Activated CD4-positive, alpha-beta memory T cell treated with anti-CD3 and anti-CD28 coated beads, Interleukin-2, amount 10 ng/mL, durations not matched to agents 7 days and 5 days (primary cell): ENCODE measurements at regions of chr17 and their contacts with region 1.

Region 1: DNA sequence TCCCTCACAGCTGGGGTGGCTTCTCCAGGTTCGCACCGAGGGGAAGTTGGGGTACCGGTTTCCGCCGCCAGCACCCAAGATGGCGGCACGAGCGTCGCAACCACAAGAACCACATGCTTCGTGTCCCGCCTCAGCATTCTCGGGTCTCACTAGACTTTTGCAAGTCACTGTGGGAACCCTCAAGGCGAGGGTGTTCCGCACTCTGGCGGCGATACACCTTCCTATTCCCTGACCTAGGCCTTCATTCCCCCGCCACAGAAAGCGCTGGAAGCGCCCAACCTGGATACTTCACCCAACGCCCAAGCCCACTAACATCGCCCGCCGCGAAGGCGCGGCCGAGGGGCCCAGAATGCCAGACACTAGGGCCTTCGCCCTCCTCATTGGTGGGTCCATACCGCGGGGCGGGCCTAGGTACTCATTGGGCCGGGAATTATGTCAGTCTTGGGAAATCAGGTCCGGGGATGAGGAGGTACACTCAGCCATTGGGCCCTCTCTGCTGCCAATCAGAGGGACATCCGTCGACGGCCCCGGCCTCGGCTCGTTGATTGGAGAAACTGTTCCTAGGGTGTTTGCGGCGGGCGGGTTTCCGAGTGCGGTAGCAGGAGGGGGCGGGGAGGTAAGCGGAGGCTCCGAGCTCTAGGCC is at the start of gene NFE2L1:
- DNase-seq: peak; percentile 99
- H3K4me3 Mint-ChIP-seq: peak within 1 kb of the TSS; percentile 99
- H3K27ac Mint-ChIP-seq: peak within 1 kb of the TSS; percentile 97
- H3K4me1 Mint-ChIP-seq: peaks cover 64% of the 10 kb centered on the region
- H3K27me3 Mint-ChIP-seq: no peaks in the 10 kb centered on the region
- total RNA-seq, gene NFE2L1: 69.4 to 70.2 TPM

Region 2: DNA sequence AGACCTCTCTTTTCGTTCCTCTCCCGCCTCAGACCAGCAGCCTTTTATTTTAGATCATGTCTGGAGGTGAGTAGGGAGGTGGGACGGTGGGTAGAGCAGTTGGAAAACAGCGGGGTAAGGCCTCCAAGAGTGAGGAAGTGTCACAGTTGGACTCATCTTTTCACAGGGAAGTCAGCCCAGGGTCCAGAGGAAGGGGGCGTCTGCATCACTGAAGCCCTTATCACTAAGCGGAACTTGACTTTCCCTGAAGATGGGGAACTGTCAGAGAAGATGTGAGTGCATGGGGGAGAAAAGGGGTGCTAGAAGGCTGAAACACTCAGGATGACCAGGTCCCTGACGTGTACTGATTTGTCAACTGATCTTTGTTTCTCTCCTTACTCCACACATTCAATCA is 215.9 kb before region 1 on chr17:
- CTCF ChIA-PET with region 1: no interaction called
- POLR2A ChIA-PET with region 1: no interaction called
- DNase-seq: no peak
- H3K4me3 Mint-ChIP-seq: peak overlapping the region; percentile 90
- H3K27ac Mint-ChIP-seq: peak overlapping the region; percentile 100
- H3K4me1 Mint-ChIP-seq: peaks cover 69% of the 10 kb centered on the region
- H3K27me3 Mint-ChIP-seq: no peaks in the 10 kb centered on the region

Region 3: DNA sequence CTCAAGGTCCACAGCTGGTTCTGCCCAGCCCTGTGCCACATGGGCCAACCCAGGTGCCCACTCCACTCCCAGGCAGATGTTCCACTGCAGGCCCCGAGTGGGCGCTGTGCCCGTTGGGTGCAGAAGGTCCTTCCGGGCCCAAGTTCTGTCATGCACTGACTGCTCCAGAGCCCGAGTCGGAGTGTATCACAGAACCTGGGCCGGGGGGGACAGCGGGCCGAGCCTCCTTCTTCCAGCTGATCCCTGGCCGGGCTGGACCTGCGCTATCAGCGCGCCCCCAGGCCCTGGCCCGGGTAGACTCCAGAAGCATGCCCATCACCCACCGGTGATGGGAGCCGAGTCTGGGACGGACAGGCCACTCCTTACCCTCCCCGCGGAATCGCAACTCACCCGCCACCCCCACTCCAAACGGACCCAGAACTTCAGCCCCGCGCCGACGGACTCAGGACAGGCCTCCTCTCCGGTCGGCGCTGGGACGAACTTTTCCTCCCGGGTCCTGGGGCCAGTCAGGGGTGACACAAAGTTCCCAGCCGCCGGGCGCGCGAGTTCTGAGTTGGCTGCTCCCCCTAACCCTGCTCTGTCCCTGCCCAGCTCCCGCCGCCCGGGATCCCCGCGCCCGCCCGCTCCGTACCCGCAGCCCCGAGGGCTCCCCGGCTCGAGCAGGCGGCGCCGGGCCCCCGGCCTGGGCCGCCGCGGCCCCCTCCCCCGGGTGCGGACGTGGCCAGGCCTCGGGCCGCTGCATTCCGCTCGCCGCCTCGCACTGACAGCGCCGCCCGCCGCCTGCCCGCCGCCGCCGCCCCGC is 10.6 kb before region 1 on chr17 and contains the start of gene COPZ2:
- CTCF ChIA-PET with region 1: interaction called, 36 read pairs
- POLR2A ChIA-PET with region 1: interaction called, 57 read pairs
- DNase-seq: peak; percentile 75
- H3K4me3 Mint-ChIP-seq: peak within 1 kb of the TSS; percentile 79
- H3K27ac Mint-ChIP-seq: peak within 1 kb of the TSS; percentile 30
- H3K4me1 Mint-ChIP-seq: peaks cover 12% of the 10 kb centered on the region
- H3K27me3 Mint-ChIP-seq: peaks cover 40% of the 10 kb centered on the region
- total RNA-seq, gene COPZ2: 7.4 to 11.5 TPM

Region 4: GRCh38 chr17:48060249-48060648 is 12.4 kb after region 1 on chr17:
- CTCF ChIA-PET with region 1: interaction called, 5 read pairs
- POLR2A ChIA-PET with region 1: interaction called, 23 read pairs
- DNase-seq: no peak
- H3K4me3 Mint-ChIP-seq: no peak overlapping the region
- H3K27ac Mint-ChIP-seq: no peak overlapping the region
- H3K4me1 Mint-ChIP-seq: peaks cover 20% of the 10 kb centered on the region
- H3K27me3 Mint-ChIP-seq: no peaks in the 10 kb centered on the region

Region 5: DNA sequence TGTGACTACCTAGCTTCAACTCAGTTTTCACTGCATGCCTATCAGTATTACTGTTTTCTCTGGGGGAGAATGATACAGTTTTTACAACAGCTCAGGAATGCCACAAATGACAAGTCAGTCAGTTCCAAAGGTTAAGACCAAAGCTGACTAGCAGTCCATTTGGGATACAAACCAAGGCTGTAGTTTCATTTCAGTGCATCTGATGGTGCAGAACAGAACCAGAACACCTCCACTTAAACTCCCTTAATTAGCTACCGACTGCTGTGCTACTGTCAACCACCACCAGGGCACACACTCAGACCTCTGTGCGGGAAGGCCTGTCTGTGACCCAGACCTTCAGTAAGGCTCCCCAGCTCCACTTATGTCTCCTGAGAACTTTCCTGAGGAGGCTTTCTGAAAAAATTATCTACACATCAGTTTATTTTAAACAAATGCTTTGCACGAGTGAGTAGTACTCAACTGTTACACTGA is 20.7 kb after region 1 on chr17:
- CTCF ChIA-PET with region 1: interaction called, 10 read pairs
- POLR2A ChIA-PET with region 1: interaction called, 9 read pairs
- DNase-seq: no peak
- H3K4me3 Mint-ChIP-seq: no peak overlapping the region
- H3K27ac Mint-ChIP-seq: no peak overlapping the region
- H3K4me1 Mint-ChIP-seq: no peaks in the 10 kb centered on the region
- H3K27me3 Mint-ChIP-seq: no peaks in the 10 kb centered on the region

Region 6: DNA sequence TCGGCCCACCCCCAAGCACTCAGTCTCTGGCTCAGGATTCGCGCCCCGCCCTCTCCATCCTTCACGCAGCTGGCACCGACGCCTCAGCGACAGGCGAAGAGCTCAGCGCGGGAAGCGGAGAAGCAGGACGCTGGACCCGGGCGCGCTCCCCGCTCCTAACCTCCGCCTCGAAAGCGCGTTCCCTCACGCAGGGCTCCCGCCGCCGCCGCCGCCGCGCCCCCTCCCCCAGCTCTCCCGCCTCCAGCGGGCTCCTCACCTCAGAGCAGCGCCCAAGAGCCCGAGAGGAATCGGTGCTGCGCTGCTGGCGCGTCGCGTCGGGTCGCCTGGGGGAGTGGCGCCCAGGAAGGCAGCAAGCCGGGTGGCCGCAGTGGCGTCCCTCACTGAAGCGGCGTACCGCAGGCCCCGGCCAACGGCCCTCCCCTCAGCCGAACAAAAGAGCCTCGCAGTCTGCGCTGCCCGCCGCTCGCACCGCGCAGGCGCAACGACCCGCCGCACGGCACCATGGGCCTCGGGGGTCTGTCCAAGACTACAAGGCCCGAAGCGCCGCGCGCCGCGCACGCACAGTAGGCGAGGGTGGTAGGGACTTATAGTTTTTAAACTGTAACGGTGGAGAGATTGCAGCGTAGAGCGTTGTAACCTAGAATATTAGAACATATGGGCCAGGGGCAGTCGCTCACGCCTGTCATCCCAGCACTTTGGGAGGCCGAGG is 53.3 kb after region 1 on chr17 and contains the start of gene CBX1:
- CTCF ChIA-PET with region 1: interaction called, 11 read pairs
- POLR2A ChIA-PET with region 1: interaction called, 49 read pairs
- DNase-seq: peak; percentile 95
- H3K4me3 Mint-ChIP-seq: peak within 1 kb of the TSS; percentile 94
- H3K27ac Mint-ChIP-seq: peak within 1 kb of the TSS; percentile 85
- H3K4me1 Mint-ChIP-seq: peaks cover 57% of the 10 kb centered on the region
- H3K27me3 Mint-ChIP-seq: no peaks in the 10 kb centered on the region
- total RNA-seq, gene CBX1: 48.3 to 50.8 TPM

Region 7: DNA sequence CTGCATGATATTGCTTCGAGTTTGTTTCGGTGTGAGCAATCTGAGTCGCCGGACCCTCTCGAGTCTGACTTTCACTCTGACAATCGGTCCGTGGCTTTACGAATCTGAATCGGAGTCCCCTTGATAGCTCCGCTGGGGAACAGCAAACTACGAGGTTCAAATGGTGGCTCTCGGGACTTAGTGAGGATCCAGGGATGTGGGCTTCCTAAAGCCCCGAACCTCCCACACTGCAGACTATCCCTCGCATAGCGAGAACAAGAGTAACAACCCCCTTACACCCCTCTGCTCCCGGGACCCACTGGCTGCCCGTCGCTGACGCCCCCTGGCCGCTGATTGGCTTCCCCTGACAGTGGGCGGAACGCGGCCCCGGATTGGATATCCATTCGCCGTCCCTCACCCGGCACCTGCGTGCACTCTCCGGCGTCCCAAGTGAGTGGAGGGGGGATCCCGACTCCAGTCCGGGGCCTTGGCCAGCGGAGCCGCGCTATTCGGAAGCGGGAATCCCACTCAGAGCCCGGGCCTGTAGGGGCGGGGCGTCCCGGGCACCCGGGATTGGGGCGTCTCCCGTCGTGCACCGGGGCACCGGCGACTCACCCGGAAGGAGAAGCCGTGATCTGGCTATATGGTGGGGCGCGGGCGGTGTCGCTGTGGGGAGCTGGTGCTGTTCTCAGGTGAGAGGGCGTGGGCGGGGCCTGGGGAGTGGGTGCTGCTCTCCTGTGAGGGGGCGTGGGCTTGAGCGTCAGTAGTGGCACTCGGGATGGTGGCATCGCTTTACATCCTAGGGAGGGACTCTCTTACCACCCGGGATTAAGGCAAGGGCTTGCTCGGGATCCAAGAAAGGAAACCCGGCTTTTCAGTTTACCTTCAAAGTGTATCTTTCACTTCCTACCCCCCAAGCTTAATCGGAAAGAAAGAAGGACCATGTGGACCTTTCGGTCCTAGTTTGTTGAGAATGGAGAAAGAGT is 59.6 kb after region 1 on chr17 and contains the start of gene SNX11:
- CTCF ChIA-PET with region 1: no interaction called
- POLR2A ChIA-PET with region 1: interaction called, 49 read pairs
- DNase-seq: peak; percentile 93
- H3K4me3 Mint-ChIP-seq: peak within 1 kb of the TSS; percentile 94
- H3K27ac Mint-ChIP-seq: peak within 1 kb of the TSS; percentile 85
- H3K4me1 Mint-ChIP-seq: peaks cover 73% of the 10 kb centered on the region
- H3K27me3 Mint-ChIP-seq: no peaks in the 10 kb centered on the region
- total RNA-seq, gene SNX11: 22.6 to 22.8 TPM